HCT116 (cell line): ENCODE measurements at regions of chr20 and their contacts with region 1.

Region 1: DNA sequence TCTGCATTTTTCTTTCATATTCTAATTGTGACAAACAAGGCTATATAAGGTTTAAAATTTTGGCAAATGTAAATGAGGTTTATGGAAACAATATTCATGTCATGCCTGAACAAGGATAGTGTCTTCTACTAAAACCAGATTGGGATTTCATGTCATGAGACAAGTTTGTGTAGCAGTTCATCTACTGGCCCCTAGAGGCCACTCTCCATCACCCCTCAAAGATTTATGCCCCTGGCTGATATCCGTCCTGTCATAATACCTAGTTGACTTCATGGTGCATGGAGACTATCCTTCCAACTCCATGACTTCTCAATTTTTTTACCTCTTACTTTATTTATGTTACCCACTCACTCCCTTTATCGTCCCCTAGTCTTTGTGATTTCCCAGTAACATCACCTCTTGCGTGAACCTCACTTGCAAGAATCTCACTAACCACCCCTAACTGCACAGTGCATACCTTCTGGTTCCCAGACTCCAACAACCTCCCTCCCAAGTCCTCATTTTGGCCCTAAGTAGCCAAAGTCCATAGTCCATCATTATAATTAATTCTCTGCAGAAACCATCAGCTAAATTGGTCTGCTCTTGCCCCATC is 179.8 kb downstream of the TASP1 start:
- DNase-seq: peak; percentile 13
- ATAC-seq: peak; percentile 82
- H3K4me3 ChIP-seq: no peak overlapping the region
- H3K27ac ChIP-seq: no peak overlapping the region
- H3K4me1 ChIP-seq: no peaks in the 10 kb centered on the region
- H3K27me3 ChIP-seq: no peaks in the 10 kb centered on the region
- CTCF ChIP-seq: peak; percentile 35 to 88 (median 82); a peak in 5 of 6 replicates
- POLR2A ChIP-seq: no peak
- RAD21 ChIP-seq: peak; percentile 49

Region 2: GRCh38 chr20:13784893-13785715 is 326.1 kb after region 1 on chr20 and contains the starts of genes ESF1 and NDUFAF5:
- CTCF ChIA-PET with region 1: interaction called, 3 read pairs
- POLR2A ChIA-PET with region 1: no interaction called
- RAD21 ChIA-PET with region 1: no interaction called
- intact Hi-C with region 1: loop called (anchors 5 kb)
- DNase-seq: peak; percentile 95
- ATAC-seq: peak; percentile 88
- H3K4me3 ChIP-seq: peak within 1 kb of the TSS; percentile 80 to 99
- H3K27ac ChIP-seq: peak within 1 kb of the TSS; percentile 64
- H3K4me1 ChIP-seq: peaks cover 7 to 18% of the 10 kb centered on the region in 2 experiments
- H3K27me3 ChIP-seq: no peaks in the 10 kb centered on the region
- CTCF ChIP-seq: no peak
- POLR2A ChIP-seq: peak; percentile 72
- RAD21 ChIP-seq: no peak
- total RNA-seq, gene ESF1: 25.4 TPM
- total RNA-seq, gene NDUFAF5: 30.8 TPM

Region 3: DNA sequence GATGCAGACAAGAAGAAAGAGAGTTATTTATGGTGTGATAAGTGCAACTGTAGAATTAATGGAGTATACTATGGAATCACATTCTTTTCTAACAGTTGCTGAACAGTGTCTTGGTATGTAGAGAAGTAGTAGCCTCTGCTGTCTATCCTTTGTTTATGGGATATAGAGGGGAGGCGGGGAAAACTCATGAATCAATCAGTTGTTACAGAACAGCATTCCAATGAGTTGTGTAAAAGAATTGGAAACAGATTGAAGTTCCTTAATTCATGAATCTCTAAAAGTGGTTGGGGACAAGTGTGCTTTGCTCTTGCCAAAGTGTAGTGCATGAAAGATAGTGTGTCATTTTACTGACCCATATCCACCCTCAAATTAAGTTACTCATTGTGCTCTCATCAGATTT is 800.7 kb after region 1 on chr20:
- CTCF ChIA-PET with region 1: no interaction called
- POLR2A ChIA-PET with region 1: no interaction called
- RAD21 ChIA-PET with region 1: no interaction called
- intact Hi-C with region 1: no loop called
- DNase-seq: no peak
- ATAC-seq: no peak
- H3K4me3 ChIP-seq: no peak overlapping the region
- H3K27ac ChIP-seq: no peak overlapping the region
- H3K4me1 ChIP-seq: no peaks in the 10 kb centered on the region
- H3K27me3 ChIP-seq: no peaks in the 10 kb centered on the region
- CTCF ChIP-seq: no peak
- POLR2A ChIP-seq: no peak
- RAD21 ChIP-seq: no peak